AG04449 (cell line): ENCODE measurements at regions of chr16 and their contacts with region 1.

Region 1: DNA sequence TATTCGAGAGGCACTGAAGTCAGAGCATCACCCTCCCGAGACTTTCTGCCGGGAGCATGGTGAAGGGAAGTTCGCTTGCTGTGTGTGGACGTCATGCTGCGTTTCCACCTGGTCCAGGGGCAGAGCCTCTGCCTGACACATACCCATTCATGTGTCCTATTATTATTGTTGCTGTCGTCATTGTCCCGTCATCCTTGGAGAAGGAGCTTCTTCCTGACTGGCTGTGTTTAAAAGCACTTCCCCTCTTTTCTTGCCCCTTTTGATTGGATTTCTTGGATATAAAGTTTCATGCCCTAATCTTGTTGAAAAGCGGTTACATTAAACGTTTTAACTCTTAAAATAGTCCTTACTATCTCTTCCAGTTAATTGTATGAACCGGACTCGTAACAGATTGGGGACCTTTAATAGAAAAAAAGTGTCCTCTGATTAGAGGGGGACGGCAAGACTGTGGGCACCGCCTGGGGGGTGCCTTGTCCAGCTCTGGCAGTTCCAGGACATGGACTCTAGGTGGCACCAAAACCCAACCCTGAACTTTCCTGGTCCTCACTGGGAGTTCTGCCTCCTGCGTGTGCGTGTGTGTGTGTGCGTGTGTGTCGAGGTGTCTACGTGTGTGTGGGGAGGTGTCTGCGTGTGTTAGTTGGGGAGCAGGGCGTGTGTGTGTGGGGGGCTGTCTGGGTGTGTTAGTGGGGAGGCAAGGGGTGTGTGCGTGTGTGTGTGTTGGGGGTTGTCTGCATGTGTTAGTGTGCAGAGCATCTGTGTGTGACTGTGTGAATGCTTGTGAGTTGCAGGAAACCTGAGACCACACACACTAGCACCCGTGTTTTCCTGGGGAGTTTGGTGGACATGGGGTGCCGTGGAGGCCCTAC is 133.3 kb upstream of the CIBAR2 start:
- DNase-seq: no peak
- H3K4me3 ChIP-seq: no peak overlapping the region
- CTCF ChIP-seq: peak; percentile 89

Region 2: GRCh38 chr16:85234310-85235204 is 11.0 kb before region 1 on chr16:
- CTCF ChIA-PET with region 1: interaction called, 38 read pairs
- POLR2A ChIA-PET with region 1: no interaction called
- DNase-seq: no peak
- H3K4me3 ChIP-seq: peak overlapping the region; percentile 46
- CTCF ChIP-seq: no peak

Region 3: DNA sequence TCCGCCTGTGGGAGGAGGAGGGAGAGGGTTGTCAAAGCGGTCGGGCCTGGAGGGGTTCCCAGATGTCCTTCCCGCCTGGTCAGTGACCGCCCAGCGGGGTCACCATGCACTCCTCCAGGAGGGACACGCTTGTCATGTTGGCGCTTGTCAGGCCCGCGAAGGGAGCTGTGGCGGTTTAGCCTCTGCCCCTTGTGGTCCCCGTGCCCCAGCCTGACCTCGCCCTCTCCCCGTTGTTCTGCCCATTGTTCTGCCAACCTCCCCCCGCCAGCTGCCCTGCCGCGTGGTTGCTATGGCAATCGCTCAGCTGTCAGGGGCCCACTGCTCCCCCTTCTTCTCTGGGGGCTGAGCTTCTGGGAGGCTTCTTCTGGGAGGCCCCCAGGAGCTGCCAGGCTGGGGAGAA is 13.1 kb after region 1 on chr16:
- CTCF ChIA-PET with region 1: interaction called, 199 read pairs
- POLR2A ChIA-PET with region 1: no interaction called
- DNase-seq: no peak
- H3K4me3 ChIP-seq: no peak overlapping the region
- CTCF ChIP-seq: no peak

Region 4: DNA sequence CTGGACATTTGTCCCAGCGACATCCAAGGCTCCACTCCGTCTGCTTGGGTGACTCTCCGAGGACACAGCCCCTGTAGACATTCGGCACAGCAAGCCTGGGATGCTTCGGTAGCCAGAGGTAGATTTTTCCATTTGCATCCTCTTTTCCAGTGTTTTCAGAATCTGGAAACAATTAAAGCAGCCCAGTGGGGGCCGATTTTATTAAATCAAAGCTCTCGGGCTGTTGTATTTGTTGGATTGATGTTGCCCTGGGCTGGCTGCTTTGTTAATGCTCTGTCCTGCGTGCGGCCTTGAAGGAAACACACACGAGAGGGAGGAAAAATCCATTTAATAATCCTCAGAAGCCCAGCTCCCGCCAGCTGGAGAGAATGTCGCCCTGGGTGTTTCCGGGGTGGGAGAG is 24.8 kb after region 1 on chr16:
- CTCF ChIA-PET with region 1: interaction called, 116 read pairs
- POLR2A ChIA-PET with region 1: no interaction called
- DNase-seq: no peak
- H3K4me3 ChIP-seq: no peak overlapping the region
- CTCF ChIP-seq: no peak